GM10248 (cell line): ENCODE measurements at regions of chr15 and their contacts with region 1.

Region 1: GRCh38 chr15:35444557-35445204 is 101.3 kb downstream of the DPH6 start:
- DNase-seq: peak; percentile 44
- CTCF ChIP-seq: peak; percentile 78

Region 2: DNA sequence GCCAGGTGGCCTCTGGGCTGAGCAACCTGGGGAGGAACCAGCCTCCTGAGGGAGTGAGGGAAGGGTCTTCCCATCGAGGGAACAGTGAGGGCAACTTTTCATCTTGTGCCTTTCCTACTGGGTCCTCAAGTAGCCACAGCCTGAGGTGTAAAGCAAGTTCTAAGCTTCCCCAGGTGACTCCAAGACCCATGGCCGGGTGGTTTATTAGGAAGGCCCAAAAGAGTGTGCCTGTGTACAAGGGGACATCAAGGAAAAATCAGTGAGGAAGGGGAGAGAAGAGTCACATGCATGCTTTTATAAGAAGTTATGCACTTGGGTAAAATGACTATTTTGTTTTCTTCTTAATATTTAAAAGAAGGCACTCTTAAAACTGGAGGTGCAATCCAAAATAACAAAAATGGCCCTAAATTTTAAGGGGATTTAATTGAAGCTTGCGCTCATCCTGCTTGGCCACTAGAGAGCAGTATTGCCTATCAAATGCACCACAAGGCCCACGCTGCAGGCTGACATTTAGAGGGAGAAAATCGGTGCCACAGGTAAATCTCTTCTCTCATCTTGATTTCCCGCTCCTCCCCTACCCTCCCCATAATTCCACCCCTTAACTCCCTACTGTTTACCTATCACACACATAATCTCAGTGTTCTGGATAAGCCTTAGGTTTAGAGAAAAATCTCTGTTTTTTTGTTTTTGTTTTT is 366.3 kb before region 1 on chr15:
- CTCF ChIA-PET with region 1: interaction called, 136 read pairs
- POLR2A ChIA-PET with region 1: no interaction called
- DNase-seq: peak; percentile 65
- CTCF ChIP-seq: peak; percentile 86

Region 3: GRCh38 chr15:35089551-35089950 is 355.1 kb before region 1 on chr15:
- CTCF ChIA-PET with region 1: interaction called, 11 read pairs
- POLR2A ChIA-PET with region 1: no interaction called
- DNase-seq: no peak
- CTCF ChIP-seq: no peak

Region 4: DNA sequence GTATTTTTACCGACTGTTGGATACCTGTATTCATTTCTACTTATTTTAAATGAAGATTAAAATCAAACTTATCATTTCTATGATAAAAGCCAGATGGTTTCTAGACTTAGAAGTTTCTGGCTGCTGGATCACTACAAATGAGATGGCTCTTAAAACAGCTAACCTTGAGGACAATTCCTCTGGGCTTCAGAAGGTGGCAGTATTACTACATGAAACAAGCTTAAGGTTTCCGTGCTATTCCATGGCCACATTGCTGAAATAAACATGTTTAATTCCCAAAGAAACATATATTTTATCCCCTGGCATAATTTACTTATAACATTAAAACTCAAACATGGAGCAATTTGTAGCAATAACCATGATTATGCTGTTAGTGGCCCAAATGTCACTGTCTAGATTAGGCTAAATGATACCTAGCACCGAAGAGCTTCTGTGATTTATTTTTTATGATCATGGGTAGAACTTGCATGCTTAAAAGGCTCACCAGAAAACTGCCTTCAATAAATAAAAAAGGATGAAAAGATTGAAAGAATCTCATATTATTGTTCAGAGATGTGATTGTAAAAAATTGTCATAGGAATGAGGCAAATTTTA is 155.6 kb before region 1 on chr15:
- CTCF ChIA-PET with region 1: interaction called, 54 read pairs
- POLR2A ChIA-PET with region 1: no interaction called
- DNase-seq: peak; percentile 21
- CTCF ChIP-seq: peak; percentile 70

Region 5: GRCh38 chr15:35397027-35397426 is 47.7 kb before region 1 on chr15:
- CTCF ChIA-PET with region 1: interaction called, 12 read pairs
- POLR2A ChIA-PET with region 1: no interaction called
- DNase-seq: no peak
- CTCF ChIP-seq: no peak

Region 6: GRCh38 chr15:35427091-35427490 is 17.6 kb before region 1 on chr15:
- CTCF ChIA-PET with region 1: interaction called, 41 read pairs
- POLR2A ChIA-PET with region 1: no interaction called
- DNase-seq: no peak
- CTCF ChIP-seq: no peak

Region 7: GRCh38 chr15:35458176-35458856 is 13.6 kb after region 1 on chr15:
- CTCF ChIA-PET with region 1: interaction called, 40 read pairs
- POLR2A ChIA-PET with region 1: no interaction called
- DNase-seq: no peak
- CTCF ChIP-seq: no peak